ENCODE measurements at regions of chr17 and their contacts with region 1.

Region 1: GRCh38 chr17:75855310-75856081 is at the start of gene WBP2:
- DNase-seq: peak; percentile 89
- ATAC-seq: peak; percentile 90
- H3K4me3 Mint-ChIP-seq: no peak within 1 kb of the TSS
- H3K27ac Mint-ChIP-seq: peak within 1 kb of the TSS; percentile 90
- H3K4me1 Mint-ChIP-seq: peaks cover 25% of the 10 kb centered on the region
- H3K27me3 Mint-ChIP-seq: no peaks in the 10 kb centered on the region
- total RNA-seq, gene WBP2: 107 TPM

Region 2: GRCh38 chr17:75764711-75765421 is 90.6 kb before region 1 on chr17 and contains the start of gene GALK1:
- POLR2A ChIA-PET with region 1: interaction called, 10 read pairs
- DNase-seq: peak; percentile 83
- ATAC-seq: peak; percentile 97
- H3K4me3 Mint-ChIP-seq: peak within 1 kb of the TSS; percentile 87
- H3K27ac Mint-ChIP-seq: peak within 1 kb of the TSS; percentile 77
- H3K4me1 Mint-ChIP-seq: peaks cover 8% of the 10 kb centered on the region
- H3K27me3 Mint-ChIP-seq: peaks cover 3% of the 10 kb centered on the region
- total RNA-seq, gene GALK1: 50.4 to 53.0 TPM

Region 3: DNA sequence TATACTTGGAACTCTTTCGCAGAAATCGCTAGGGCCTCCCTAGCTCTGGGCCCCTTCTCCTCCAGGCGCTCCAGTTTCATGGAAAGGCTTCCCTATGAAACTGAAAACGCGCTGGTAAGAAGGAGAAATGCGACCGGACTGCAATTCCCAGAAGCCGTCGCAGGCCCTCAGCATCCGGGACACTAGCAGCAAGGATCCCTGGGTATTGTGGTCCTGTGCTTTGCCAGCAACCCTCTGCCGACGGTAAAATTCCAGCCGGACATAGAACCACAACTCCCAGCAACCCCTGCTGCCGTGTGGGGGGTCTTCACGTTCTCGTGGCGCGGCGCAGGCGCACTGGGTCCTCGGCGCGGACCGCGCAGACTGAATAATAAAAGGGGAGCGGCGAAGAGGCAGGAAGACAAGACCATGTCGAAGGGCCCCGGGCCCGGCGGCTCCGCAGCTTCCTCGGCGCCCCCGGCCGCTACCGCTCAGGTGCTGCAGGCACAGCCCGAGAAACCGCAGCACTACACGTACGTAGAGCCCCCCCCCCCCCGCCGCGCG is 71.0 kb before region 1 on chr17 and contains the start of gene UNK:
- POLR2A ChIA-PET with region 1: interaction called, 126 read pairs
- DNase-seq: peak; percentile 95
- ATAC-seq: peak; percentile 65
- H3K4me3 Mint-ChIP-seq: peak within 1 kb of the TSS; percentile 94
- H3K27ac Mint-ChIP-seq: peak within 1 kb of the TSS; percentile 99
- H3K4me1 Mint-ChIP-seq: peaks cover 36% of the 10 kb centered on the region
- H3K27me3 Mint-ChIP-seq: no peaks in the 10 kb centered on the region
- total RNA-seq, gene UNK: 37.4 to 39.8 TPM

Region 4: DNA sequence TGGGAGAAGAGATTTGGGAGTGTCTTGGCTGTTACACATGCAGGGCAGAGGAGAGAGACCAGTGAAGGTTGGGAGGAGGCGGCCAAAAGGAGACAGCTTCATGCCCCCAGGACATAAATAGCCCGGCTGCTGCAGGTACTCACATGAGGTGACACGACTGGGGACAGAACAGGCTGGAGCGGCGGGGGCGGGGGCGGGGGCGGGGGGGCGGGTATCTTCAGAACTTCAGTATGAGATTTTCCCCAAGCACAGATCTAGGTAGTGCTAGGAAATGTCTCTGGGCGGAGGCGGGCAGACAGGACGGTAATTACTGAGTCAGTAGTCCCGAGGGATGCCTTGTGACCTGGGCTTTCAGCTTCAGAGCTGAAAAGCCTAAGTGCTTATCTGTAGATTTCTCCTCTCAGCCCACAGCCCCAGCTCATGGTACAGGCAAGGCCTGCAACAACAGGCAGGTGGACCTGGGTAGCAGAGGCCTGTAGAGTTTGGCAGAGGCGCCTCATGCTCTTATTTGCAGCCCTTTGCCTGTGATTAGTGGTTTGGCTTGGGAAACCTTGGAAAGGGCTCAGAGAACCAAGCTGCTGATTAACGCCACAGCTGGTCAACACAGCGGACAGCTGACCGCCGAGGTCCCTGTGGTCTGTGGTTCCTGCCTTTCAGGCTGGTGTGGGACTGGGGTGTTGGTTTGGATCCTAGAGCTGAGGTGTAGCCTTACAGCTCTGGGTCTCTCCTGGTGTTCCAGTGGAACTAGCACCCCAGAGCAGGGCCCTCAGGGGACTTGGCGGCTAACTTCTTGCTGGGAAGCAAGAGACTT is 46.4 kb before region 1 on chr17:
- POLR2A ChIA-PET with region 1: no interaction called
- DNase-seq: no peak
- ATAC-seq: no peak
- H3K4me3 Mint-ChIP-seq: no peak overlapping the region
- H3K27ac Mint-ChIP-seq: no peak overlapping the region
- H3K4me1 Mint-ChIP-seq: peaks cover under 1% of the 10 kb centered on the region
- H3K27me3 Mint-ChIP-seq: no peaks in the 10 kb centered on the region

Region 5: DNA sequence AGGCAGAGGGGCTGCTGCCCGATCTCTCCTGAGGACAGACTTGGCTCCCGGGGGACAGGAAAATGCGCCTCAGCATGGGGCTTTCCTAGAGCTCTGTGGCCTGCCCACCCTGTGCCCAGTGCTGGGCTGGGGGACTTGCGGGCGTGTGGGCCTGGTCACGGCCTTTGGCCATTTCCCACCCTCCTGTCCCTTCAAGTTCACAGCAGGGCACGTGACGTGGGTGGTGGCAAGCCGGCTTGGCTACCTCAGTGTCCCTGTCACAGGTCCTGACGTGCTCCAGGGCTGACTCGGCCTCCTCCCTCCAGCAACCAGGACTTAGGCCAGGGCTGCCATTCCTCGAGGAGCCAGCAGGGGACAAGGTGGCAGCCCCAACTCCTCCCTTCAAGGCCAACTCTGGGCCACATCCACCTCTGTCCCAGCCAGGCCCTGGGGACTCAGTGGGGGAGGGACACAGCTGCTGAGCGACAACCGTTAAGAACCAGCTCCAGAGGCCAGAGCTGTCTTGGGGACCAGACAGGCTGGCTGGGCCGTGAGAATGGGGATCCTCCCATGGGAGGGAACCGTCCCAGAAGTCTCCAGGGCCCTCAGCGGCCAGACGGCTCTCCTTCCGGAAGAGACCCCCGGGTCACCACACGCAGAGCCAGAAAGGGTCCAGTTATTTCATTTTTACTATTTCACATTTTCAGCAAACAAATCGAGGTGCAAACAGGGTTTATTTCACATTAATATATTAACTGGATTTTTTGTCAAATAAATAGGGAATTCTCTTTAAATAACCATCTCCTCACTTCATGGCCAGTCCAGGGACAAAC is 10.2 kb before region 1 on chr17:
- POLR2A ChIA-PET with region 1: interaction called, 101 read pairs
- DNase-seq: peak; percentile 71
- ATAC-seq: peak; percentile 36
- H3K4me3 Mint-ChIP-seq: peak overlapping the region; percentile 51
- H3K27ac Mint-ChIP-seq: peak overlapping the region; percentile 83
- H3K4me1 Mint-ChIP-seq: peaks cover 14% of the 10 kb centered on the region
- H3K27me3 Mint-ChIP-seq: no peaks in the 10 kb centered on the region

Region 6: DNA sequence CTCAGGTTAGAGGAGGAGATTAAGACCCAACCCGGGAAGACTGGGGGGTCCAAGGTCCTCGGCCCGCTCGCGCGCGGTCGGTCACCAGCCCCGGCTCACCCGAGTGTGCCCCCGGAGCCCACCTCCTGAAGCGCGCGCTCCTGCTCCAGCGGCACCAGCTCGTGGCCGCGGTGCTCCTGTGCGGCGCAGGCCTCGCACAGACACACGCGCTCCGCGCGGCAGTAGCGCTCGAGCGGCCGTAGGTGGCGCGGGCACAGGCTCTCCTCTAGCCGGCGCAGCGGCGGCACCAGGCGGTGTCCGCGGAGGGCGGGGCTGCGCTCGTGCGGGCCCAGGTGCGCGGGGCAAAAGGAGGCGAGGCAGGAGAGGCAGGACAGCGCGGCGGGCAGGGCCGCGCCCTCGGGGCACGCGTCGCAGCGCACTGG is 22.3 kb after region 1 on chr17:
- POLR2A ChIA-PET with region 1: interaction called, 41 read pairs
- DNase-seq: peak; percentile 84
- ATAC-seq: peak; percentile 70
- H3K4me3 Mint-ChIP-seq: peak overlapping the region; percentile 91
- H3K27ac Mint-ChIP-seq: peak overlapping the region; percentile 93
- H3K4me1 Mint-ChIP-seq: peaks cover 28% of the 10 kb centered on the region
- H3K27me3 Mint-ChIP-seq: peaks cover 12% of the 10 kb centered on the region